GM13977 (cell line): ENCODE measurements at regions of chrX and their contacts with region 1.

Region 1: DNA sequence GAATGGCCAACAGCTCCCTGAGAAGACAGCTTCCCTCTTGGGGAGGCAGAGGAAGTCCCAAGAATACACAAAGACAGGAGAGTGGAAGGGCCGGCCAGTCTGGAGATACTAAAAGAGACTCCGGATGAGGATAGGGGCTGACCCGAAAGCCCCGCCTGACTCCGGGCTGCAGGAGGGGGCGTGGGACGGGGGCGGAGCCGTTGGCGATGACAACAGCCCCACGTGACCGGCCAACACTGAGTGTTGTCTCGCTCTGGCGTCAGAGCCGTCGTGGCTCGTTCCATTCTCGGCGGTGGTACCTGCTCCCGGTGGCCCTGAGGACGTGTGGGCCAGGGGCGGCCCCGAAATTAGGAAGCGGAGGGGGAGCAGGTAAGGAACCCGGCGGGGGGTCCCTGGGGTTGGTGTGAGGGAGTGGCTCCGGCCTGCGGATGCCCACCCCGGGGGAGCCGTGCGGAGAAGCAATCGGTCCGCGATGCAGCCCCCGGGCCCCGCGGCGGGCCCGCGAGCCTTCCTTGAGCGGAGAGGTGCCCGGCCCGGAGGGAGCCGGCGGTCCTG is at the start of gene BEX4:
- DNase-seq: peak; percentile 78
- CTCF ChIP-seq: no peak

Region 2: DNA sequence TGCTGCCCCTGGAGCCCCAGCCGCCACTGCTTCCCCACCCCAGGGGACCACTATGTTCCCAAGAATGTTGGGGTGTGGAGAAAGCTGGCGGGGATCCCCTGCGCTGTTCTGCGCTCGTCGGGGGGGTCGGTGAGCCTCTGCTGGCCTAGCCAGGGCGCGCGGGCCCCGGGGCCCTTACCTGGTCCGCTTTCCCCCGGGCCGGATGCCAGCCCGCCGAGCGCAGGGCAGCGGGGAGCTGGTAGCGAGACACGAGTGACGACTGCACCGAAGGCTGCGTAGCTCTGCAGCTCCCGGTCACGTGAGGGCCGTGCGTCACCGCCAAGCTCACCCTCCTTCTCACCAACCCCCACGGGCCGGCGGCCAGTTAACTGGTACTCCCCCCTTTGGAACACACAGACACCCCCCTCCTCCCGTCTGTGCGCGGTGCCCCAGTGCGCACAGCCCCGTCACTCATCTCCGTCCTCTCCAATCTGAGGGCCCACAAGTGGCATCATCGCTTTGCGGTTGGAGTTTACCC is 151.0 kb before region 1 on chrX and contains the start of gene BEX1:
- in situ Hi-C with region 1: no loop called
- DNase-seq: peak; percentile 2
- CTCF ChIP-seq: no peak

Region 3: DNA sequence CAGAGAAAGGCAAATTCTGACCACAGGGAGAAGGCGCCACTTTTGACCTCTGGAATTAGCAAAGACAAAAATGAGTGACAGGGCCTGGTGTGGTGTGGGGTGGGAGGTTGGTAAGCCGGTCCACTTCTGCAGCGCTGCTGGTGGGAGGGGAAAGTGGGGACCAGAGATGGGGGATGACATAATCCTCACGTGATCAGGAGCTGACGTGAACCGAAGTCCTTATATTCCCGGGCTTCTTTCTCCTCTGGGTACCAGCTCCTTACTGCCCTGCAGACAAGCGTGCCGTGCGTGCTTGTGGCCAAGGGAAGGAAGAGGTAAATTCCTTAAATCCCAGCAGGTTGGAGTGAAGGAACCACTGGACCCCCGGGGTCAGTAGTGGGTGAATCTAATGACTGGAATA is 115.0 kb after region 1 on chrX and contains the start of gene TCEAL7:
- in situ Hi-C with region 1: no loop called
- DNase-seq: no peak
- CTCF ChIP-seq: no peak

Region 4: DNA sequence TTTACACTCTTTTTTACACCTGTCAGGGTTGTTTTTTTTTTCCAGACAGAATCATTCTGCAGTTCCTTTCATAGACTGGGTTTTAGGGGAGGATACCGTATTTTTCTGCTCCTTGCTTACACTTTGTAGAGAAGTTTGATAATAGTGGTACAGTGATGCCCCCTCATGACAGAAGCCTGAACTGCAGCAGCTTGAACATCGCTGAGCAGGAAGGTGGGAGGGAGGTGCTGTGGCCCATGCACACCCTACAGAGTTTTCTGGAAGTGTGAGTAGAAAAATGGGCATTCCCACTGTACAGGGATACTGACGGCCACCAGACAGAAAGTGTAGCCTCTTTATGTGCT is 249.8 kb after region 1 on chrX:
- in situ Hi-C with region 1: loop called (anchors 25 kb)
- DNase-seq: peak; percentile 34
- CTCF ChIP-seq: peak; percentile 79